ENCODE measurements at regions of chr15 and their contacts with region 1.

Region 1: DNA sequence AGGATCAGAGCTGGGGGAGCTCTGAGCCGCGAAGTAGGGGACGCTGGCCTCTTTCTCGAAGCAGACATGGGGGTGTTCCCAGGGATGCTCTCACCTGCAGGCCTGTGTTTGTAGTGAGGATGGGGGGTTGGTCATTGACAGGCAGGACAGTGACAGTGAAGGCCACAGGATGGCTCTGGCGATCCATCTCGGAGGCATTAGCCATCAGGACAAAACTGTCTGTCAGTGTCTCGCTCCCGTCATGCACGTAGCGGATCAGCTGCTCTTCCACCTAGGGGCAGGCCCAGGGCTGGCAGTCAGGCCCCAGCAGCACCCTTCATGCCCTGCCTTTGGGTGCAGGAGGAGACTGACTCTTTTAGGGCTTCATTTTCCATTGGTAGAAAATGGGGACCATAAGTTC is 28.0 kb downstream of the CSPG4 start:
- DNase-seq: no peak
- H3K4me3 ChIP-seq: no peak overlapping the region
- H3K4me1 ChIP-seq: no peaks in the 10 kb centered on the region
- H3K27me3 ChIP-seq: no peaks in the 10 kb centered on the region

Region 2: GRCh38 chr15:74937226-74937595 is 747.4 kb before region 1 on chr15:
- in situ Hi-C with region 1: no loop called
- DNase-seq: peak in 1 of 2 experiments; percentile 60
- H3K4me3 ChIP-seq: peak overlapping the region; percentile 96
- H3K4me1 ChIP-seq: peaks cover 24% of the 10 kb centered on the region
- H3K27me3 ChIP-seq: no peaks in the 10 kb centered on the region

Region 3: DNA sequence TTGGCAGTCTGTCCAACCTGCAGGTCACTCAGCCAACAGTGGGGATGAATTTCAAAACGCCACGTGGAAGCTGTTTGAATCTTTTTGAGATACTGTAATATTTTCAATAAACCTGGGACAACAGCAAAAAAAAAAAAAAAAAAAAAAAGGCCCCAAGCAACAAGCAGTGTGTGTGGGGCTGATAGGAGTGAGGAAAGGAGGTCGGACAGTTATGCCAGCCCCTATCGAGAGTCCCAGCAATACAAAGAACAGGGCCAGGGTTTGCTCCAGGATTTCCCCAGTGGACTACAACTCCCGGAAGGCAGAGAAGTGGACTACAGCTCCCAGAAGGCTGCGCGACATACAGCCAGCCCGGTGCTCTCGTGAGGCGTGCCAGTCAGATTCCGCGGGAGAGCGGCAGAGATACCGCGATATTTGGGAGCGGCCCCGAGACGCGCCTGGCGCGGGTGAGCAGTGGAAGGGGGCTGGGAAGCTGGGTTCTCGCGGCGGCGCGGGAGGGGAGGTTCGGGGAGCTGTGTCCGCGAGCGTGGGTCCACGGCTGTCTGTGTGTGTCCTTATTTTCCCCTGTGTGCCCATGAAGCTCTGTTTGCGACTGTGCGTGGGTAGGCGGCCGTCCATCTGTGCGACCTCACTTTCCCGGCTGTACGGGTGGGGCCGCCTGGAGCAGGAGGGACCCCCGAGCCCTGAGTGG is 661.3 kb before region 1 on chr15 and contains the start of gene PPCDC:
- in situ Hi-C with region 1: loop called (anchors 10 kb)
- DNase-seq: peak; percentile 100
- H3K4me3 ChIP-seq: peak within 1 kb of the TSS; percentile 96
- H3K4me1 ChIP-seq: peaks cover 5% of the 10 kb centered on the region
- H3K27me3 ChIP-seq: no peaks in the 10 kb centered on the region

Region 4: DNA sequence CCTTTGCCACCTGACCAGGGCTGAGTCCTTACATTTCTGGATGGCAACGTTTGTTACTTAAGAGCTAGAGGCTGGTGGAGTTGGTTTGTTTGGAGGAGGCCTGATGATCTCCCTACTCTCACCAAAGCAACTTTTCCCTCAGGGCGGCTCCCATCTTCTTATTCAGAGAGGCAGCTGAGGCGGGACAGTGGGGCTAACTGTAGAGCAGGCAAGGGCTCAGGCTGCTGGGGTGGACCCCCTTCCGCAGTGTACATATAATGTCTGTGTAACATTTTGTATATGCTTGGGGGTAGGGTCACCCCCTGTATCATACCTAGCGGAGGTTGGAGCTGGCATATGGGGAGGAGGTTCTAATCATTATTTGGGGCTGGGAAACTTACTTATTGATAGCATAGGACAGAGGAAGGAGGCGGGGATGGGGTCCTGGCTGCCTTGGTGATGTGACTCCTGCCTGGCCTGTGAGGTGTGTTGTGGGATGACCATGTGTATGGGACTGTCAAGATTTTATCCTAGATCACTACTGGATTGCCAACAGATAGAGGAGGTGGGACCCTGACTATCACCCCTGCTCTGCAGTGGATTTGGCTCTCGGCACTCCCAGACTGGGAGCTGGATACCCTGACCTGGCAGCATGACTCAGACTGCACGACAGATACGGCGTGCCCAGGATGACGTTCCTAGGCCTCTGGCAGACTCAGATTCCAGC is 106.1 kb after region 1 on chr15:
- in situ Hi-C with region 1: loop called (anchors 10 kb)
- DNase-seq: peak in 1 of 2 experiments; percentile 7
- H3K4me3 ChIP-seq: no peak overlapping the region
- H3K4me1 ChIP-seq: no peaks in the 10 kb centered on the region
- H3K27me3 ChIP-seq: peaks cover 47% of the 10 kb centered on the region

Measured in HAP-1 (cell line).